ENCODE measurements at regions of chr12 and their contacts with region 1.

Region 1: DNA sequence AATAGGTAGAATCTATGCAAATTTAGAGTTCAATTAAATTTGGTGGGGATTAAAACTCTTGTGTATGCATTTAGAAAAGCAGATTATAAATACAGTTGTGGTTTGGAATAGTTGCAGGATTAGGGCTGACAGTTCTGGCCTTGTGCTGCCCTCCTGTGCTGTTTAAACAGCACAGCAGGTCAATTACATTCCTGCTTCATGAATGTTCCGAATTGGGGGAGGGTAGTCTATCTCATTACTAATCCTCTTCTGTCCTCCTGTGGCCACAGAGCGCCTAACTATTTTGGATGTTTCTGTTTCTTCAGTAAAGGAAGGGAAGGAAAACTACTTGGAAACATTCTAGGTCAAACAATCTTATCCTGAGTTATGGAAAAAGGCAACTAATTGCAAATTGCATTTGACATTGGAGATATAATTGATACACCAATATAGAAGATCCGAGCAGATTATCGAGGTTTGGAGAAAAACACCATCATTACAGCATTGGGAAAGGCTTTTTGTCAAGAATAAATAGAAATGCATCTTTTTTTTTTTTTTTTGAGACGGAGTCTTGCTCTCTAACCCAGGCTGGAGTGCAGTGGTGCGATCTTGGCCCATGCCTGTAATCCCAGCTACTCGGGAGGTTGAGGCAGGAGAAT is 8.7 kb upstream of the GPR19 start:
- DNase-seq: peak; percentile 89
- ATAC-seq: peak; percentile 97
- H3K4me3 ChIP-seq: no peak overlapping the region
- H3K27ac ChIP-seq: peak overlapping the region; percentile 17; the same call in 1 of the 2 replicates
- H3K4me1 ChIP-seq: peaks cover 5% of the 10 kb centered on the region
- H3K27me3 ChIP-seq: no peaks in the 10 kb centered on the region
- CTCF ChIP-seq: peak; percentile 97

Region 2: GRCh38 chr12:12081836-12082497 is 622.7 kb before region 1 on chr12:
- CTCF ChIA-PET with region 1: no interaction called
- POLR2A ChIA-PET with region 1: no interaction called
- intact Hi-C with region 1: loop called (anchors 1 kb)
- DNase-seq: peak; percentile 52
- ATAC-seq: peak; percentile 83
- H3K4me3 ChIP-seq: no peak overlapping the region
- H3K27ac ChIP-seq: no peak overlapping the region
- H3K4me1 ChIP-seq: peaks cover 5% of the 10 kb centered on the region; the same call in 1 of the 2 replicates
- H3K27me3 ChIP-seq: no peaks in the 10 kb centered on the region
- CTCF ChIP-seq: peak; percentile 51

Region 3: DNA sequence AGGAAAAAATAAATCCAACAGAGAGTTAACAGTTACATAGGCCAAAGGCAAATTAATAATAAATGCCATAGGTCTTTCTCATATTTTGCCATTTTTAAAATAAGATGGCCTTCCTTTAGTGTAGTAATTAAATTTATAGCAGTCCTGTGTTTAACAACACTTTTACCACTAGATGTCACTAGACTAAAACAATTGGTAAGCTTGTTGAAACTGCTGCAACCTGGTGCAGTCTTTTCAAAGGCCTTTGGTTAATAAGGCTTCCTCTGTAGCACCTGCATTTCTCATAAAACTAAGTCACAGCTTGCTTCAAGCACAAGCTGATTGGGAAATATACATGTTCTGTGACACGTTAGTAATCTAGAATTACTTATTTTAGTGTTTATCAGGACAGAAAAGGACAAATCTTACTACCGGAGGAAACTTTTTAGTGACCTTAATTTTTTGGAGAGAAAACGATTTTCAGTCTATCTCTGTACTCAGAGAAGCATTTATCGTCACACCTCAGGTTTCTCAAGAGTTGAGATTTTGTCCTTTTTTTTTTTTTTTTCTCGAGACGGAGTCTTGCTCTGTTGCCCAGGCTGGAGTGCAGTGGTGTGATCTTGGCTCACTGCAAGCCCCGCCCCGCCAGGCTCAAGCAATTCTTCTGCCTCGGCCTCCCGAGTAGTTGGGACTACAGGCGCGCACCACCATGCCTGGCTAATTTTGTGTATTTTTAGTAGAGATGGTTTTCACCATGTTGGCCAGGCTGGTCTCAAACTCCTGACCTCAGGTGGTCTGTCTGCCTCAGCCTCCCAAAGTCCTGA is 327.9 kb before region 1 on chr12:
- CTCF ChIA-PET with region 1: interaction called, 4 read pairs
- POLR2A ChIA-PET with region 1: no interaction called
- intact Hi-C with region 1: loop called (anchors 1 kb)
- DNase-seq: peak; percentile 81
- ATAC-seq: peak; percentile 66; the same call in 1 of the 2 replicates
- H3K4me3 ChIP-seq: no peak overlapping the region
- H3K27ac ChIP-seq: peak overlapping the region; percentile 23
- H3K4me1 ChIP-seq: no peaks in the 10 kb centered on the region
- H3K27me3 ChIP-seq: no peaks in the 10 kb centered on the region
- CTCF ChIP-seq: peak; percentile 79

Region 4: DNA sequence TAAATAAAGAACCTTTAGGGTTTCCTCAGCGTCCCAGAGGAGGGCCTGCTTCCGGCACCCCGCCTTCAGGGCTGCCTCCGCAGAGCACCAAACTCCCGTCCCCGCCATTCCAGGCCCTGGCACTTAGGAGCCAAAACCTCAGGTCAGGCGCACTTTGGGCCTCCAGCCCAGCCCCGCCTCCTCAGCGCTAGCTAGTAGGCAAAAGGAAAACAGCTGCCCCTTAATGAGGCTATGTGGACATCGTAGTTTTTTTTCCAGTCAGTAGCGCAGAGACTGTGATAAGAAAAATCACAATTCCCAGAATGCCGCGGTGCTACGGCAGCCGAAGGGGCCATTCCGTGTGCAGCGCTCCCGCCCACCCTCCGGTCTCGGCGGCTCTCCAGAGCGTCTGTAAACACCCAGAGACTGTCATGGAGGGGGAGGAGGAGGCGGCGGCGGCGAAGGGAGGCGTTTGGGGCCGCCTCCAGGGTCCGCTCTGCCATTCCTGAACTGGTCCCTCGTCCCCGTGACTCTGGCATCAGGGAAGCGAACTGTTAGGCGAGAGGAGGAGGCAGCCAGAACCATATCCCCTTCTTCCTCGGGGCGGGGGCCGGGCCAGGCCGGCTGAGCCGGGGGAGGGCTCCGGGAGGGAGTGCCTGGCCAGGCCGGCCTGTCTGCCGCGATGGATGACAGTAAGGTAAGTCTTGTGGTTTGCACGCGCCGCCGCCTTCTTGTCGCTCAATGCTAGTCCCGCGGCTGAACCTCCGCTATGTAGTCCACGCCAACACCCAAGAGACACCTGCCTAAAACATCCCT is 93.0 kb before region 1 on chr12 and contains the start of gene CREBL2:
- CTCF ChIA-PET with region 1: no interaction called
- POLR2A ChIA-PET with region 1: no interaction called
- intact Hi-C with region 1: loop called (anchors 2 kb)
- DNase-seq: peak; percentile 87
- ATAC-seq: peak; percentile 68
- H3K4me3 ChIP-seq: peak within 1 kb of the TSS; percentile 86
- H3K27ac ChIP-seq: peak within 1 kb of the TSS; percentile 95
- H3K4me1 ChIP-seq: peaks cover 26% of the 10 kb centered on the region
- H3K27me3 ChIP-seq: no peaks in the 10 kb centered on the region
- CTCF ChIP-seq: no peak
- total RNA-seq, gene CREBL2: 11.7 and 14.2 TPM in 2 replicates

Region 5: GRCh38 chr12:12654691-12655460 is 49.8 kb before region 1 on chr12:
- CTCF ChIA-PET with region 1: no interaction called
- POLR2A ChIA-PET with region 1: no interaction called
- intact Hi-C with region 1: loop called (anchors 5 kb)
- DNase-seq: no peak
- ATAC-seq: no peak
- H3K4me3 ChIP-seq: no peak overlapping the region
- H3K27ac ChIP-seq: no peak overlapping the region
- H3K4me1 ChIP-seq: no peaks in the 10 kb centered on the region
- H3K27me3 ChIP-seq: no peaks in the 10 kb centered on the region
- CTCF ChIP-seq: no peak